CD4-positive, alpha-beta T cell (primary cell): ENCODE measurements at regions of chr16 and their contacts with region 1.

Region 1: GRCh38 chr16:30355144-30355894 is at the start of gene CD2BP2:
- DNase-seq: peak; percentile 71 to 97 (median 84)
- ATAC-seq: peak; percentile 88
- H3K4me3 ChIP-seq: peak within 1 kb of the TSS; percentile 98
- H3K4me3 Mint-ChIP-seq: peak within 1 kb of the TSS; percentile 91
- H3K27ac ChIP-seq: peak within 1 kb of the TSS; percentile 92 to 99
- H3K27ac Mint-ChIP-seq: peak within 1 kb of the TSS; percentile 89
- H3K4me1 ChIP-seq: peaks cover 35% of the 10 kb centered on the region
- H3K4me1 Mint-ChIP-seq: peaks cover 28% of the 10 kb centered on the region
- H3K27me3 ChIP-seq: no peaks in the 10 kb centered on the region
- H3K27me3 Mint-ChIP-seq: no peaks in the 10 kb centered on the region
- CTCF ChIP-seq: no peak
- total RNA-seq, gene CD2BP2: 39.1 to 41.7 TPM

Region 2: DNA sequence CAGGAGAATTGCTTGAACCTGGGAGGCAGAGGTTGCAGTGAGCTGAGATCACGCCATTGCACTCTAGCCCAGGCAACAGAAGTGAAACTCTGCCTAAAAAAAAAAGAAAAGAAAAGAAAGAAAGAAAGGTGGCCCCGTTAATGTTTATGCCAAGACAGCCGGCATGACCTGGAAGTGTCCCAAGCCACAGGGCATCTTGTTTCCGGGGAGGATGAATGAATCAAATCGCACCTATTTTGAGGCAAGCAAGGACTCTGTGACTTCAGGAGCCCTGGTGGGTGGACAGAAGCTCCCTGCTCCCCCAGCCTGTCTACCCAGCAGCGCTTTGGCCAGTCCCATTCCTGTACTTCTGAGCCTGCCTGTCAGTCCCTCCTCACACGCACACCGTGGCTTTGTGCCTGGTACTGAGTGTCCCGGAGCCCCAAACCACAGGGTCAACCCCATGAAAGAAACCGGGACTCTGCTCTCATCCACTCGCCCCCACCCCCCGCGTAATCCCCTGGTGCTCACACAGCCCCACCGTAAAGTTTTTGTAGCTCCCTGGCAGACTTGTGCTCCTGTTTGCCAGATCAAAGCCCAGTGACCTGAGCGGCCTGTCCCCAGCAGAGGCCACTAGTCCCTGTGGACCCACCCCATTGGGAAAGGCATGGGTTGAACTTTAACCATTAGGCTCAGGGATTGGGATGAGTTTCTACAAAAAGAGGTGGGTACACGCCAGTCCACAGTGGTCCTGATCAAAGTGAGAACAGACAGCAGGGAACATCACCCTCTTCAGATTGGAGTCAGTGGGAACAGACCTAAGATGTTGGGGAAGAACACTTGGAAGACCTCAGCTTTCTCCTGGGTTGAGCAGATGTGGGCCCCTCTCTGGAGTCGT is 19.5 kb before region 1 on chr16:
- CTCF ChIA-PET with region 1: no interaction called
- POLR2A ChIA-PET with region 1: interaction called, 12 read pairs
- intact Hi-C with region 1: loop called (anchors 1 to 2 kb)
- DNase-seq: peak in 4 of 14 experiments; percentile 36 to 67 (median 56)
- ATAC-seq: no peak
- H3K4me3 ChIP-seq: peak overlapping the region; percentile 58
- H3K4me3 Mint-ChIP-seq: peak overlapping the region; percentile 87
- H3K27ac ChIP-seq: peak overlapping the region in 1 of 2 donors; percentile 37
- H3K27ac Mint-ChIP-seq: peak overlapping the region; percentile 90
- H3K4me1 ChIP-seq: peaks cover 17% of the 10 kb centered on the region
- H3K4me1 Mint-ChIP-seq: peaks cover 20% of the 10 kb centered on the region
- H3K27me3 ChIP-seq: no peaks in the 10 kb centered on the region
- H3K27me3 Mint-ChIP-seq: no peaks in the 10 kb centered on the region
- CTCF ChIP-seq: no peak

Region 3: DNA sequence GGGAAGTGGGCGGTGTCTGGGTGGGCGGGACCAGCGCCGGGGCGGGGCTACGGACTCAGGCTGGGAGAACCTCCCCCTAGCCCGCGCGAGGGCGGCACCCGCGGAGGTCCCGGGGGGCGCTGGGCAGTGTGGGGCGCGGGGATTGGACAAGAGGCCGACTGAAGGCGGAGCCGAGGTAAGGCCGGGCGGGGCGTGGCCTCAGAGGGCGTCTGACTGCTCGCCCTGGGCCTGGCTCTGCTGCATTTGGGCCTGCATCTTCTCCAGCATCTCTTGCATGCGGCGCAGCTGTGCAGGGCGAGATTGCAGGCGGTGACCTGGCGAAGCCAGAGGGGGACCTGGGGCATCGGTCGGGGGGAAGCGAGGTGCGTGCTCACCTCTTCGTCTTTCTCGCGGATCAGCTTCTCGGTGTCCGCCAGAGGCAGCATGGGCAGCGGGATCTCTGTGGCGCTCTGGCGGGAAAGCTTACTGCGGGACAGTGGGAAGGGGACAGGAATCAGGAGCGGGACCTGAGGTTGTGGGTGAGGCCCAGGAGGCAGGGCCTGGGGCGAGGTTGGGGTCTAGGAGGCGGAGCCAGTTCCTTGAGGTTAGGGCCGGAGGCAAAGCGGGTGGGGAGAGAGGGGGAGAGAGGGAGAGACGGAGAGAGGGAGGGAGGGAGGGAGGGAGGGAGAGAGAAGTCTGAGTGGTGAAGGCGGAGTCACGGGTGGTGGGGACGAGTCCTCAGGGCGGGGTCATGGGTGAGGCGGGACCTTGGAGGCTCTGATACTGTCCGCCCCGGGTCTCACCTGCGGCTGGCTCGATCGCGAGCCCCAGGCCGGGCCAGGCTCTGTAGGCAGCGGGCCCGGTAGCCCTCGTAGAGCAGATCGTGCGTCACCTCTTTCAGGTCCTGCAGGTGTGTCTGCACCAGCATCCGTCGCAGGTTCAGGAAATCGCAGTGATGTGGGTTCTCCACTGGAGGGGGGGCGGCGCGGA is 23.2 kb after region 1 on chr16:
- CTCF ChIA-PET with region 1: no interaction called
- POLR2A ChIA-PET with region 1: interaction called, 17 read pairs
- intact Hi-C with region 1: no loop called
- DNase-seq: peak; percentile 98 to 100 (median 100)
- ATAC-seq: peak; percentile 74
- H3K4me3 ChIP-seq: peak overlapping the region; percentile 71
- H3K4me3 Mint-ChIP-seq: peak overlapping the region; percentile 99
- H3K27ac ChIP-seq: peak overlapping the region; percentile 100
- H3K27ac Mint-ChIP-seq: peak overlapping the region; percentile 100
- H3K4me1 ChIP-seq: peaks cover 79% of the 10 kb centered on the region
- H3K4me1 Mint-ChIP-seq: peaks cover 60% of the 10 kb centered on the region
- H3K27me3 ChIP-seq: no peaks in the 10 kb centered on the region
- H3K27me3 Mint-ChIP-seq: no peaks in the 10 kb centered on the region
- CTCF ChIP-seq: no peak

Region 4: GRCh38 chr16:30407102-30407803 is 51.9 kb after region 1 on chr16 and contains the start of gene ZNF771:
- CTCF ChIA-PET with region 1: interaction called, 9 read pairs
- POLR2A ChIA-PET with region 1: interaction called, 3 read pairs
- intact Hi-C with region 1: loop called (anchors 10 kb)
- DNase-seq: peak; percentile 68 to 96 (median 86)
- ATAC-seq: peak; percentile 71
- H3K4me3 ChIP-seq: peak within 1 kb of the TSS; percentile 69
- H3K4me3 Mint-ChIP-seq: peak within 1 kb of the TSS; percentile 97
- H3K27ac ChIP-seq: peak within 1 kb of the TSS; percentile 66 to 67
- H3K27ac Mint-ChIP-seq: peak within 1 kb of the TSS; percentile 79
- H3K4me1 ChIP-seq: peaks cover 31% of the 10 kb centered on the region
- H3K4me1 Mint-ChIP-seq: peaks cover 21% of the 10 kb centered on the region
- H3K27me3 ChIP-seq: no peaks in the 10 kb centered on the region
- H3K27me3 Mint-ChIP-seq: no peaks in the 10 kb centered on the region
- CTCF ChIP-seq: no peak
- total RNA-seq, gene ZNF771: 0.80 to 1.2 TPM